ENCODE measurements at regions of chr1 and their contacts with region 1.

Region 1: GRCh38 chr1:18597160-18598042 is 33.2 kb upstream of the PAX7 start:
- DNase-seq: peak; percentile 60
- H3K27ac ChIP-seq: no peak overlapping the region
- CTCF ChIP-seq: peak; percentile 98

Region 2: DNA sequence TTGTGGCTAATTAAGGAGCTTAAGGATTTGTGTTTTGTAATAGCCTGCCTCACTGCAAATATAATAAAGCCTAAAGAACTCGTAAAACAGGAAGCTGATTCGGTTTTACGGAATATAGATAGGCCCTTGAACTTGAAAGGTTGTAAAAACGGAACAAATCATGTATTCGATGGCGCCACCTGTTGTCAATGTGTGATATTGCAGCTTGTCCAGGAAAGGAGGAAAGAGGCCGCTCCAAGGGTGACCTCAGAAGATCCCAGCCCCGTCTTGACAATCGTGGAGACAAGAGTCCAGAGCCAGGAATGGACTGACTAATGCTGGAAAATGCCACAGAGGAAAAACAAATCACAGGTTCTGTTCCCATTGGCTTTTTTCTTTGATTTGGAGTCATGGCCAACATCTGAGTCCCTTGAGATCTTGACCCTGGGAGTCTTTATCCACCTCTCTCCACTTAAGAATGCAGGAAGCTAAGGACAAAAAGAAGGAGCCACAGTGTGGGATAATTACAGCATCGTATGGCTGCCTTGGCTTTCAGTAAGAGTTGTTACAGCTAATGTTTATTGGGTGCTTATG is 496.8 kb before region 1 on chr1:
- CTCF ChIA-PET with region 1: no interaction called
- POLR2A ChIA-PET with region 1: no interaction called
- DNase-seq: peak; percentile 68
- H3K27ac ChIP-seq: no peak overlapping the region
- CTCF ChIP-seq: peak; percentile 80

Region 3: GRCh38 chr1:18575620-18576019 is 21.8 kb before region 1 on chr1:
- CTCF ChIA-PET with region 1: interaction called, 10 read pairs
- POLR2A ChIA-PET with region 1: no interaction called
- DNase-seq: peak; percentile 76
- H3K27ac ChIP-seq: no peak overlapping the region
- CTCF ChIP-seq: peak; percentile 87

Region 4: DNA sequence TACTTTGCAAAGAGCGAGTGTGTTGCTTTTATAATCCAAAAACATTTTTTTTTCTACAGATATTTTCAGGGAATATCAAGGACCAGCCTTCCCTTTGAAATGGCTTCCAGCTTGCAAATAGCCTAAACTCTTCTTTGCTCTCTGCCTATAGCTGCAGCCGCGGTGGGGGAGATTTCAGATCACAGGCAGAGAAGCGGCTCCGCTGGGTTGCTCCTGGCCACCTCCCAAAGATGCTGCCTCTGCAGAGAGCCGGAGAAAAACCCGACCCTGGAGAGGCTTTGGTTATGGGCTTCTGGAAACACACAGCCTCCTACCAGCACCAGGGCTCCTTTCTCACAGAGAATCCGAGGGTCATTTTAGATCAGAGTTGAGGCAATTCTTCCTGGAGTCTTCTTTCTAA is 14.7 kb after region 1 on chr1:
- CTCF ChIA-PET with region 1: interaction called, 10 read pairs
- POLR2A ChIA-PET with region 1: no interaction called
- DNase-seq: no peak
- H3K27ac ChIP-seq: no peak overlapping the region
- CTCF ChIP-seq: no peak

Region 5: GRCh38 chr1:18681423-18681835 is 84.0 kb after region 1 on chr1:
- CTCF ChIA-PET with region 1: interaction called, 75 read pairs
- POLR2A ChIA-PET with region 1: no interaction called
- DNase-seq: peak; percentile 74
- H3K27ac ChIP-seq: no peak overlapping the region
- CTCF ChIP-seq: peak; percentile 73

Region 6: DNA sequence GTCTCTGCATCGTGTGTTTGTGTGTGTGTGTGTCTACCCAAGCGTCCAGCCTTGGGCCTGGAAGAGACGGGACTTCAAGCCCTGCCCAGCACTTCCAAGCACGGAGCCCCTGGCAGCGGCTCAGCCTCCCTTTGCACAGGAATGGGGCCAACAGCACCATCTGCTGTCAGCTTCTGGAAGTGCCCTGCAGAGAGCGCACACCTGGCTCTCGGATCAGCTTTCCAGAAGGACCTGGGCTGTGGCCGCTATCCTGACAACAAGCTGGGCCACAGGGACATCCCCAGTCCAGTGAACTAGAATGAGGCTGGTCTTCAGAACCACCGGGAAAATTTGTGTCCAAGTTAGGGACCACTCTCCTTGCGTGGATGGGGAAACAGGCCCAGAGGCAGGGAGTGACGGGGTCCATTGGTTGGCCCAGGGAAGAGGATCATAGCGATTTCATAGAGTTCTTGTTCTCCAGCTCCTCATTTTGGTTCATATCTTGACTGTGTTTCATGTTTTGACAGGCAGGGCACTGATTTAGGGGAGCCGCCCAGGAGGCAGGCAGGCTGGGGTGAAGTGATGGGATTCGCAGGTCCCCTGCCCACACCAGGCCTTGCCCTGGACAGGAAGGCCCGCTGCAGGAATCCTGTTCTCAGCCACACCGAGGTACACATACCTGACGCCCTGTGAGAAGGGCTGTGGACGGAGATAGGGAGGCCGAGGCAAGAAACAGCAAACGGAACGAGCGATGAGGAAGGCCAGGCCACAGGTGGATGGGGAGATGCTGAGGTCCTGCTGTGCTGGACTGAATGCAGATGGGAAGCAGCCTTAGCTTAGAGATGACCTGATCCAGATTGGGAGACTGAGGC is 223.6 kb after region 1 on chr1:
- CTCF ChIA-PET with region 1: interaction called, 80 read pairs
- POLR2A ChIA-PET with region 1: no interaction called
- DNase-seq: peak; percentile 80
- H3K27ac ChIP-seq: no peak overlapping the region
- CTCF ChIP-seq: peak; percentile 94

Region 7: GRCh38 chr1:18836654-18837053 is 239.3 kb after region 1 on chr1:
- CTCF ChIA-PET with region 1: interaction called, 11 read pairs
- POLR2A ChIA-PET with region 1: no interaction called
- DNase-seq: peak; percentile 23
- H3K27ac ChIP-seq: no peak overlapping the region
- CTCF ChIP-seq: no peak

Region 8: GRCh38 chr1:18875107-18875795 is 277.9 kb after region 1 on chr1:
- CTCF ChIA-PET with region 1: interaction called, 26 read pairs
- POLR2A ChIA-PET with region 1: no interaction called
- DNase-seq: peak; percentile 59
- H3K27ac ChIP-seq: no peak overlapping the region
- CTCF ChIP-seq: peak; percentile 72

Measured in RWPE1 (cell line).